Activated CD4-positive, alpha-beta T cell treated with anti-CD3 and anti-CD28 coated beads for 36 hours (primary cell): ENCODE measurements at regions of chrX and their contacts with region 1.

Region 1: GRCh38 chrX:25144043-25144940 is 128.5 kb upstream of the ARX start:
- DNase-seq: peak; percentile 55
- ATAC-seq: no peak
- H3K4me3 Mint-ChIP-seq: no peak overlapping the region
- H3K27ac Mint-ChIP-seq: no peak overlapping the region
- H3K4me1 Mint-ChIP-seq: peaks cover 2% of the 10 kb centered on the region
- H3K27me3 Mint-ChIP-seq: peaks cover 3% of the 10 kb centered on the region

Region 2: GRCh38 chrX:25020905-25021449 is 123.3 kb before region 1 on chrX:
- CTCF ChIA-PET with region 1: interaction called, 9 read pairs
- POLR2A ChIA-PET with region 1: no interaction called
- intact Hi-C with region 1: loop called (anchors 2 kb)
- DNase-seq: peak; percentile 60
- ATAC-seq: peak; percentile 60
- H3K4me3 Mint-ChIP-seq: no peak overlapping the region
- H3K27ac Mint-ChIP-seq: no peak overlapping the region
- H3K4me1 Mint-ChIP-seq: peaks cover 20% of the 10 kb centered on the region
- H3K27me3 Mint-ChIP-seq: peaks cover 50% of the 10 kb centered on the region

Region 3: DNA sequence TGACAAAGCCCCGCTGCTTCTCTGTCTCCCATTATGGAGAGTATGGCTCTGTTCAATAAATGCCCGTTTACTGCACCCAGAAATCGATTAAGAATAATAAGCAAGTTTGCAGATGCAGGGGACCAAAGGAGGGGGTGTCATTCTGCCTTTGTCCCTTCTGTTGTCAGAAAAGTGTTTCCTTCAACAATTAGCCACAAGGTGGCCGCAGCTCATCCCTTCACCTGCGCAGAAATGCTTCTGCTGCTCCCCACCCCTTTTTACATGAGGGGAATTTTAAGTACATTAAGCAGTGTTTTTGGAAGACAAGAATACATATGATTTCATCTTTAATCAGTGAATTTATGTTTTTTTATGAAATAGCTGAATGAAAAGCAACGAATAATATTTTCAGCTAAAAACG is 47.1 kb after region 1 on chrX:
- CTCF ChIA-PET with region 1: no interaction called
- POLR2A ChIA-PET with region 1: no interaction called
- intact Hi-C with region 1: no loop called
- DNase-seq: no peak
- ATAC-seq: no peak
- H3K4me3 Mint-ChIP-seq: no peak overlapping the region
- H3K27ac Mint-ChIP-seq: no peak overlapping the region
- H3K4me1 Mint-ChIP-seq: no peaks in the 10 kb centered on the region
- H3K27me3 Mint-ChIP-seq: peaks cover 2% of the 10 kb centered on the region

Region 4: DNA sequence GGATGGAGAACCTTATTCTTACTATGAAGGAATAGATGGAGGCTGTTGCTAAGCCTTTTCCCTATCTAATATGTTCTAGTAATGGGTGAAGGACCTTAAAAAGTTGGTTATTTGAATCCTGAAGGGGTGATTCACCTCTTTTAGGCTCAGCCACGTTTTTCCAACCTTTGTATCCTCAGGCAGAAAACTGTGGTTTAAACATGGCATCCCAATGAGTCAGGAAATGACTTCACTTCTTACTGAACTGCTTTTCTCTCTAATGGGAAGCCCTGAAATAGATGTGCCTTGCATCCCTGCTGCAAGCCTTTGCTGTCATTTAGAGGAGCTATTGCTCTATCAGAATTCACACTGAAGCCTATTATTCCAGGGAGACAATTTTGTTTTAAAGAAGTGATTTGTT is 62.5 kb after region 1 on chrX:
- CTCF ChIA-PET with region 1: no interaction called
- POLR2A ChIA-PET with region 1: no interaction called
- intact Hi-C with region 1: no loop called
- DNase-seq: no peak
- ATAC-seq: no peak
- H3K4me3 Mint-ChIP-seq: no peak overlapping the region
- H3K27ac Mint-ChIP-seq: no peak overlapping the region
- H3K4me1 Mint-ChIP-seq: no peaks in the 10 kb centered on the region
- H3K27me3 Mint-ChIP-seq: no peaks in the 10 kb centered on the region